Endothelial cell of umbilical vein (primary cell): ENCODE measurements at regions of chr10 and their contacts with region 1.

Region 1: GRCh38 chr10:103244663-103245271 is 920 bp upstream of the RPEL1 start:
- DNase-seq: peak; percentile 81
- H3K4me3 ChIP-seq: no peak overlapping the region
- H3K27ac ChIP-seq: no peak overlapping the region
- H3K4me1 ChIP-seq: peaks cover 8% of the 10 kb centered on the region
- H3K27me3 ChIP-seq: peaks cover 0 to 1% of the 10 kb centered on the region in 2 experiments
- CTCF ChIP-seq: peak; percentile 86 to 93
- POLR2A ChIP-seq: no peak

Region 2: DNA sequence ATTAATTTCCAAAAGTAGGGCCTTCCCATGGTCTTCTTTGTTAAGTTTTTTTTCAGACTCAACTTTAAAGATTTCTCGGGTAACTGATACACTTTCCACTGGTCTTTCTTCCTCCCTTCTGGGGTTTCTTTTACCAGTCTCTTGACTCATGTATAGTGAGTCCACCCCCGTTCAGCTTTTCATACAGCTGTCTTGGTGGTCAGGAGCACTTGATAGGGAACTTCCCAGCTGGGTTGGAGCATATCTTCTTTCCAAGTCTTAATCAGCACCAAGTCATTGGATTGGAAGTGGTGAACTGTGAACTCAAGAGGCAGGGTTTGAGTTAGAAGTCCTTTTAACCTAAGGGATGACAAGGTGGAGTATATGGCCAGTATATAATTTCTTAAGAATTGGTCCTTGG is 1047.9 kb before region 1 on chr10:
- CTCF ChIA-PET with region 1: no interaction called
- POLR2A ChIA-PET with region 1: no interaction called
- dilution Hi-C with region 1: no loop called
- intact Hi-C with region 1: no loop called
- DNase-seq: no peak
- H3K4me3 ChIP-seq: no peak overlapping the region
- H3K27ac ChIP-seq: no peak overlapping the region
- H3K4me1 ChIP-seq: no peaks in the 10 kb centered on the region
- H3K27me3 ChIP-seq: peaks cover 9 to 13% of the 10 kb centered on the region in 2 experiments
- CTCF ChIP-seq: no peak
- POLR2A ChIP-seq: no peak

Region 3: DNA sequence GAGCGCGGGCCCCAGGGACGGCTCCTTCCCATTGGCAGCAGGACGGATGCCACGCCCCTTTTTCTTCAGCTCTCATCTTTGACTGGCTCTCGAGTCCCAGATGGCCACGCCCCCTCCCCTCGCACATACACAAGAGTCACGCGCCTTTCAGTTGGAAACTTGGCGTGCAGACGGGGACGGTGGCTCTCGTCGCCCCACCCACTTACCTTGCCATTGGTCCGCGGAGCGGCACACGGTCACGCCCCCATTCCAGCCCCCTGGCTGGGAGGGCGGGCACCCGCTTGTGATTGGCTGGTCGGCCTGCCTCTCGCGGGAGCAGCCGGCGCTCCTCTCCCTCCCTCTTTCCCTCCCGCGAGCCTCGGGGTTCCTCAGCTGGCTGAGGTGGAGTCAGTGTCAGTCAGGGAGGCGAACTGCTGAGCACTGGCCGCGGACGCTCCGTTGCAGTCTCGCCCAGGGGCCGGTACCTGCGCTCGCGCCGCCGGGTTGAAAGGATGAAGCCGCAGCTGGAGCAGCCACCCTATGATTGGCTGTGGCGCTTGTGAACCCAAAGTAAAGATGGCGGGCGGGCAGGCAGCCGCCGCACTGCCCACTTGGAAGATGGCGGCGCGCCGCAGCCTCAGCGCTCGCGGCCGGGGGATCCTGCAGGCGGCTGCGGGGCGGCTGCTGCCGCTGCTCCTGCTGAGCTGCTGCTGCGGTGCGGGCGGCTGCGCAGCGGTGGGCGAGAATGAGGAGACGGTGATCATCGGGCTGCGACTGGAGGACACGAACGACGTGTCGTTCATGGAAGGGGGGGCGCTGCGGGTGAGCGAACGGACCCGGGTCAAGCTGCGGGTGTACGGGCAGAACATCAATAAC is 326.6 kb before region 1 on chr10 and contains the start of gene CNNM2:
- CTCF ChIA-PET with region 1: interaction called, 211 read pairs
- POLR2A ChIA-PET with region 1: interaction called, 3 read pairs
- dilution Hi-C with region 1: no loop called
- intact Hi-C with region 1: loop called (anchors 1 kb)
- DNase-seq: peak; percentile 100
- H3K4me3 ChIP-seq: peak within 1 kb of the TSS; percentile 43 to 76 (median 47)
- H3K27ac ChIP-seq: peak within 1 kb of the TSS; percentile 57
- H3K4me1 ChIP-seq: peaks cover 10% of the 10 kb centered on the region
- H3K27me3 ChIP-seq: peaks cover 13 to 15% of the 10 kb centered on the region in 2 experiments
- CTCF ChIP-seq: no peak
- POLR2A ChIP-seq: peak; percentile 59
- total RNA-seq, gene CNNM2: 3.0 and 3.2 TPM in 2 replicates

Region 4: DNA sequence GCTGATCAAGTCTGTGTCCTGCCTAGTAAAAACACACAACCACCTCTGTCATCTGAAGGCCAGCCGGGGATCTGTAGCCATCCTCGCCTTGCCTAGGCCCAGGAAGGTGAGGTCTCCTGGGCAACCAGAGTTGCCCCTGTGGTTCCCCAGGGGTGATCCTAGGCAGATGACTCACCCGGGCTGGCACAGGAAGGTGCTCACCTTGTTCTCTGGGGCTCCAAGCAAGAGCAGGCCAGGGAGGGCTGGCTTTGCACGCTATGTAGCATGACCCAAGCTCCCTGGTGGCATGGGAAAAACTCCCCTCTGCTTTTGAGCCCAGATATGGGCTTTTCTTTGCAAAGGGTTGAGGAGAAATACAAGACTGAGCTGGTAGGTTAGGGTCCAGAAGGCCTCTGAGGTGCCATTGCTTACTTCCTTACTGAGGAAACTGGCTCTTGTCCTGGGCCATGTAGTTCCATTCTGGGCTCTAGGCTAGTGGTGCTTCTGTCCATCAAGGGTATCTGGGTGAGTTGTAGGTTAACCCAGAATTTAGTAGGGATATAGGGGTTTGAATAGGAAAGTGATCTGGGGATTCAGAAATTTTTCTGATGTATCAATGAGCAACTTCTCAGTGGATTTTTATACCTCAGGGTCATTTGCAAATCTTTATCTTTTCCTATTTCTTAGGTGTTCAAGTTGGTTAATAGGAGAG is 163.7 kb before region 1 on chr10:
- CTCF ChIA-PET with region 1: interaction called, 28 read pairs
- POLR2A ChIA-PET with region 1: no interaction called
- dilution Hi-C with region 1: no loop called
- intact Hi-C with region 1: loop called (anchors 5 kb)
- DNase-seq: no peak
- H3K4me3 ChIP-seq: no peak overlapping the region
- H3K27ac ChIP-seq: no peak overlapping the region
- H3K4me1 ChIP-seq: no peaks in the 10 kb centered on the region
- H3K27me3 ChIP-seq: no peaks in the 10 kb centered on the region
- CTCF ChIP-seq: no peak
- POLR2A ChIP-seq: no peak

Region 5: DNA sequence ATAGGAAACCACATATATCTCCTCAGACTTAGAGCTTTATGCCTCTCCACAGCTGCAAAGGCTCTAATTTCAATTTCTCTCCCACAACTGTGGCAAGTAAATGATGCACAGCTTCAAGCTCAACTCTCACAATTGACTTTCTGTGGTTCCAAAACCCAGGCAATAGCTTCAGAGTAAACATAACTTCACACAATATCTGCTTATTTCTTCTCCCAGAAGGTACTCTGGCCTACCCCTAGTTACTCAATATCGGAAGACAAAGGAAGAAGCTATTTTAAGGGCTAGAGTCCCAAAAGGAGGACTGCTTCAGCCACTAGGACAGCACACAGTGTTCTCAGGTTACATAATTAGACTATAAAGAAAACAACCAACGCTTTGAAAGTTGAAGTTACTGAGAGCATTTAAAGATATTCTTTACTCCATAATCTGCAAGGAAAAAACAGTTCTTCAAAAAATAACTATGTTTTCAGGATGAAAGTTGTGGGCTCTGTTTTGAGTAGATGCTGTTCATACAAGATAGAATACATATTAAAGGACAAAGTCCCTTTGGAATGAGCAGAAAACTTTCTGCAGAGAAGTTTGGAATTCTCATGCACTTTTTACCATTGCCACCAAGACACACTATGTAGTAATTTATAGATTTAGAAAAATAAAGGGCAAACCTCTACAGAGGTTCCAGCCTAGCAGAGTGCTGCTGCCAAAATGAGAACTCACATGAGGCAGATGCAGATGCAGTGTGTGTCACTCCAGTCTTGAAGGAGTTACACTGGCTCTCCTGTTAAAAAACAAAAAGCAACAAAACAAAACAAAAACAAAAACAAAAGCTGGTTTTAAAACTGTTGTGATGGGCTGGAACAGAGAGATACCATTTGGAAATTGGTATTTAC is 133.5 kb before region 1 on chr10:
- CTCF ChIA-PET with region 1: interaction called, 87 read pairs
- POLR2A ChIA-PET with region 1: no interaction called
- dilution Hi-C with region 1: no loop called
- intact Hi-C with region 1: loop called (anchors 5 kb)
- DNase-seq: no peak
- H3K4me3 ChIP-seq: no peak overlapping the region
- H3K27ac ChIP-seq: no peak overlapping the region
- H3K4me1 ChIP-seq: no peaks in the 10 kb centered on the region
- H3K27me3 ChIP-seq: no peaks in the 10 kb centered on the region
- CTCF ChIP-seq: no peak
- POLR2A ChIP-seq: no peak

Region 6: DNA sequence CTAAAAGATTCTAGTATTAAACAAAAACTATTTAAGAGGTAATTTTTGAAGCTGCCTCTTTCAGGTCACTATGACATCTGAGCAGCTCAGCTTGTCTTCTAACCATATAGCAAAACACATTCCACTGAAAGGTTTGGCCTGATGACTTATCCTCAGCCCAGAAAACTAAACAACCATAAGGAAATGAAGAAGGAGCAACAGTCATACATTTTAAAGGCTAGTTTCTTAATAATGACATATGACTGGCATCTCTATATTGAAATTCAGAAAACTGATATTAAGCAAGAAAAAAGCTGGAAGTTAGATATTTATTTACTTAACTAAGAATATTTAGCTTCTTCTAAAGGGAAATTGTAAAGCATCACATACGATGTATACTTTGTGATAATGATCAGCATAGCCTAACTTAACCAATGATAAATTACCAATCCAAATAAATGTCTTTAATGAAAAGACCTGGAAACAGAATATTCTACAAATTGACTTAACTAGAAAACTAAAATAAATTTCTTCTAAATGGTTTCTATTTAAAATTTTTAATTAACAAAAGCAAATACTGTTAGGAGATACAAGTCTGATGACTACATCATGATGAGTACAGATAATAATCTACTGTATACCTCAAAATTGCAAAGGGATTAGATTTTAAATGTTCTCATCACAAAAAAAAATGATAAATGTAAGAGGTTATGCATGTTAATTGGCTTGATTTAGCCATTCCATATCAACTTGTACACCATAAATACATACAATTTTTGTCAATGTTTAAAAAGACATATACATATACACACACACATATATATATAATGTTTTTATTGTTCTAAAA is 76.1 kb before region 1 on chr10:
- CTCF ChIA-PET with region 1: interaction called, 15 read pairs
- POLR2A ChIA-PET with region 1: no interaction called
- dilution Hi-C with region 1: no loop called
- intact Hi-C with region 1: no loop called
- DNase-seq: peak; percentile 36
- H3K4me3 ChIP-seq: no peak overlapping the region
- H3K27ac ChIP-seq: no peak overlapping the region
- H3K4me1 ChIP-seq: peaks cover 34% of the 10 kb centered on the region
- H3K27me3 ChIP-seq: no peaks in the 10 kb centered on the region
- CTCF ChIP-seq: no peak
- POLR2A ChIP-seq: no peak

Region 7: GRCh38 chr10:103231047-103231551 is 13.7 kb before region 1 on chr10:
- CTCF ChIA-PET with region 1: interaction called, 57 read pairs
- POLR2A ChIA-PET with region 1: interaction called, 18 read pairs
- dilution Hi-C with region 1: no loop called
- intact Hi-C with region 1: loop called (anchors 1 kb)
- DNase-seq: peak; percentile 92
- H3K4me3 ChIP-seq: no peak overlapping the region
- H3K27ac ChIP-seq: peak overlapping the region; percentile 97
- H3K4me1 ChIP-seq: peaks cover 32% of the 10 kb centered on the region
- H3K27me3 ChIP-seq: no peaks in the 10 kb centered on the region
- CTCF ChIP-seq: no peak
- POLR2A ChIP-seq: peak; percentile 60